H1 (cell line): ENCODE measurements at regions of chr9 and their contacts with region 1.

Region 1: DNA sequence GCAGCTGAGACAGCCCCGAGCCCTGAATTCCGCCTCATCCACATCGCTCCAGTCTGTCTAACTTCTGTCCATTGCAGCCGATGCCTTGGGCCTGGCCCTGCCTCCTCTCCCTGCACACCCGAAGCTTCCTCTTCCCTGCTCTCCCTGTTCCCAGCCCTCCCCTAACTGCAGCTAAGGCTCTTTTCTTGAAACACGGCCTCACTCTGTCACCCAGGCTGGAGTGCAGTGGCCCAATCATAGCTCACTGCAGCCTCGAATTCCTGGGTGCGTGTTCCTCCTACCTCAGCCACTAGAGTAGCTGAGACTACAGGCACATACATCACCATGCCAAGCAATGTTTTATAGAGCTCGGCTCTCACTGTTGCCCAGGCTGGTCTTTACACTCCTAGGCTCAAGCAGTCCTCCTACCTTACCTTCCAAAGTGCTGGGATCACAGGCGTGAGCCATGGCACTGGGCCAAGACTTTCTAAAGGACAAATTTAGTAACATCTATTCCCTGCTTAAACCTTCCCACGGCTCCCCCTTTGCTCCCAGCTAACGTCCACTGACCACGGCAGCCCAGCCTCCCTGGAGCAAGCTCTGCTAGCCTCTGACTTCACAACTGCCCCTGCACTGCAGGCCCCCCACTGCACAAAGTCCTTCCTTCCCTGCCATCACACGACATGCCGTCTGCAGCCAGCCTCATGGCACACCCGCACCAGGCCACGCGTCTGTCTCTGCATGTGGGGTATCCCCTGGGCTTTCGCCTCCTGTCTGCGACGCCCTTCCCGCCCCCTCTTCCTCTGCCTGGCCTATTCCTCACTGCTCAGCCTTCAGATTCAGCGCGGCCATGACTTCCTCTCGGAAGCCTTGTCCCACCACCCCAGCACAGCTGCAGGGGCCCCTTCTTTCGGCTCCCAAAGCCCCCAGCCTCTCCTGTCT is 28.6 kb downstream of the LAMC3 start:
- DNase-seq: no peak
- H3K4me3 ChIP-seq: no peak overlapping the region
- H3K27ac ChIP-seq: no peak overlapping the region
- H3K4me1 ChIP-seq: no peaks in the 10 kb centered on the region; a peak in 2 of 7 replicates
- H3K27me3 ChIP-seq: no peaks in the 10 kb centered on the region
- CTCF ChIP-seq: no peak
- EP300 ChIP-seq: no peak
- POLR2A ChIP-seq: no peak
- RAD21 ChIP-seq: no peak

Region 2: GRCh38 chr9:131008909-131009618 is 28.5 kb before region 1 on chr9 and contains the start of gene LAMC3:
- CTCF ChIA-PET with region 1: interaction called, 22 read pairs
- POLR2A ChIA-PET with region 1: interaction called, 3 read pairs
- DNase-seq: peak in 1 of 2 experiments; percentile 80
- H3K4me3 ChIP-seq: peak within 1 kb of the TSS; percentile 31 to 57 (median 40)
- H3K27ac ChIP-seq: no peak within 1 kb of the TSS
- H3K4me1 ChIP-seq: peaks cover 2 to 22% (median 8%) of the 10 kb centered on the region in 4 experiments
- H3K27me3 ChIP-seq: peaks cover 0 to 10% (median 7%) of the 10 kb centered on the region in 4 experiments; a peak in 5 of 7 replicates
- CTCF ChIP-seq: peak; percentile 49 to 72 (median 69)
- EP300 ChIP-seq: no peak
- POLR2A ChIP-seq: no peak; a peak in 1 of 3 replicates
- RAD21 ChIP-seq: peak; percentile 56 to 68
- total RNA-seq, gene LAMC3: 12.3 and 13.2 TPM in 2 replicates

Region 3: GRCh38 chr9:131024978-131025868 is 12.4 kb before region 1 on chr9:
- CTCF ChIA-PET with region 1: interaction called, 24 read pairs
- POLR2A ChIA-PET with region 1: interaction called, 3 read pairs
- DNase-seq: no peak
- H3K4me3 ChIP-seq: no peak overlapping the region
- H3K27ac ChIP-seq: no peak overlapping the region; the same call in 1 of the 2 replicates
- H3K4me1 ChIP-seq: peaks cover 0 to 2% (median 0%) of the 10 kb centered on the region in 4 experiments; a peak in 2 of 7 replicates
- H3K27me3 ChIP-seq: no peaks in the 10 kb centered on the region
- CTCF ChIP-seq: no peak
- EP300 ChIP-seq: no peak
- POLR2A ChIP-seq: no peak
- RAD21 ChIP-seq: no peak